ENCODE measurements at regions of chr2 and their contacts with region 1.

Region 1: GRCh38 chr2:74482801-74483674 is at the starts of genes CCDC142 and TTC31:
- DNase-seq: peak; percentile 95
- H3K4me3 ChIP-seq: peak within 1 kb of the TSS; percentile 78
- H3K27ac ChIP-seq: peak within 1 kb of the TSS; percentile 80
- H3K4me1 ChIP-seq: peaks cover 18% of the 10 kb centered on the region
- CTCF ChIP-seq: peak; percentile 95
- total RNA-seq, gene CCDC142: 52.3 and 53.0 TPM in 2 replicates
- total RNA-seq, gene TTC31: 34.6 and 49.5 TPM in 2 replicates

Region 2: DNA sequence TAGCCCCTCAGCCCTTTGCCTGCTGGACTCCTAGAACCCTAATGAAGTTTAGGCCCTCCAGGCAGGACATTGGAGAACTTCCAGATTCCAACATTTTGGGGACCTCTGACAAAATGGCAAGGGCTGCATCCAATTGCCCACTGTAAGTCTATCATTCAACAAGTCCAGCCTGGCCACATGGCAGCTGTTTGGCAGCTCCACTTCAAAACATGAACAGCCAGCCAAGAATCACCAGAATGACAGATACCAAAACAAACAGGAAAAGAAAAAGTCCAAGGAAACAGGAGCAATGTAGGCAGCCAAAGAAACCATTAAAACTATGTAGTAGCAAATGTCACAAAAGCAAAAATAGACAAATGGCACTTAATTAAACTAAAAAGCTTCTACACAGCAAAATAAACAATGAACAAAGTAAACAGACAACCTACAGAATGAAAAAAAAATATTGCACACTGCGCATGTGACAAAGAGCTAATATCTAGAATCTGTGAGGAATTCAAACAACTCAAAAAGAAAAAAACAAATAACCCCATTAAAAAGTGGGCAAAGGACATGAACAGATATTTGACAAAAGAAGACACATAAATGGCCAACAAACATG is 165.2 kb before region 1 on chr2:
- CTCF ChIA-PET with region 1: no interaction called
- POLR2A ChIA-PET with region 1: no interaction called
- intact Hi-C with region 1: no loop called
- DNase-seq: no peak
- H3K4me3 ChIP-seq: no peak overlapping the region
- H3K27ac ChIP-seq: no peak overlapping the region
- H3K4me1 ChIP-seq: no peaks in the 10 kb centered on the region
- CTCF ChIP-seq: no peak

Region 3: GRCh38 chr2:74472086-74472944 is 10.7 kb before region 1 on chr2 and contains the start of gene MRPL53:
- CTCF ChIA-PET with region 1: no interaction called
- POLR2A ChIA-PET with region 1: interaction called, 25 read pairs
- intact Hi-C with region 1: no loop called
- DNase-seq: peak; percentile 97
- H3K4me3 ChIP-seq: peak within 1 kb of the TSS; percentile 85
- H3K27ac ChIP-seq: peak within 1 kb of the TSS; percentile 81
- H3K4me1 ChIP-seq: peaks cover 16% of the 10 kb centered on the region
- CTCF ChIP-seq: 0 out of 2 replicates have a peak, but pooled peaks have one; percentile 20
- total RNA-seq, gene MRPL53: 46.1 and 85.7 TPM in 2 replicates

Region 4: DNA sequence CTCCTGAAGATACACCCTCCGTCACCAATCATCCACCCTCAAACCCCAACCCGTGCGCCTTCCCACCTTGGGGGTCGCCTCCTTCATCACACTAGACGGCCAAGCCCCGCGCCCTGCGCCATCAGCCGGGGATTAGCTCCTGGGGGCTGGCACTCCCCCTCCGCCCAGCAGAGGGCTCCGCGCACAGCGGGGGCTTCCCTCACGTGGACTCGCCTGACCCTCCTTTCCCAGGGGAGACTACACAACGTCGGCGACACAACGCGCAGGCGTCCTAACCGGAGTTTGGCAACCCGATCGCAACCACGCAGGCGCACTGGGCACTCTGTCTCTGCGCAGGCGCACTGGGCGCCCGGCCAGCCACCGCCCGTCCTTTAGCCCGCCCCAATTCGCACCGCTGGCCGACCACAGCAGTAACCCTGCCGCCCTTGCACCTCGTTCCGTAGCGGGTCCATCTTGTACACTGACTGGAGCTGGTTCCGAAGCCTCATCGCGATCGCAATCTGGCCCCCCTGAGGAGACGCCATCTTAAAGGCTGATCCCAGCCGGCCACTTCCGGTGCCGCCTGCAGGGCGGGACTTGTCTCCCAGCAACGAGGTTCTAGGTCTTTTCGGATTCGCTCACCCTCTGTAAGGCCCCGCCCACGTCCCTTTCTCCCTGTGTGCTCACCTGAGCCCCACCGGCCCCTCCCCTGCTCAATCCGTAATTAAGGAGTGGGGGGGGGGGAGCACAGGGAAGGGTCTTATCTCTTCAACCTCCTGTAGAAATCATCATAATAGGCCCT is 24.3 kb after region 1 on chr2 and contains the start of gene PCGF1:
- CTCF ChIA-PET with region 1: no interaction called
- POLR2A ChIA-PET with region 1: no interaction called
- intact Hi-C with region 1: loop called (anchors 1 kb)
- DNase-seq: peak; percentile 99
- H3K4me3 ChIP-seq: peak within 1 kb of the TSS; percentile 77
- H3K27ac ChIP-seq: peak within 1 kb of the TSS; percentile 81
- H3K4me1 ChIP-seq: peaks cover 25% of the 10 kb centered on the region
- CTCF ChIP-seq: peak; percentile 76
- total RNA-seq, gene PCGF1: 9.9 and 16.7 TPM in 2 replicates

Region 5: DNA sequence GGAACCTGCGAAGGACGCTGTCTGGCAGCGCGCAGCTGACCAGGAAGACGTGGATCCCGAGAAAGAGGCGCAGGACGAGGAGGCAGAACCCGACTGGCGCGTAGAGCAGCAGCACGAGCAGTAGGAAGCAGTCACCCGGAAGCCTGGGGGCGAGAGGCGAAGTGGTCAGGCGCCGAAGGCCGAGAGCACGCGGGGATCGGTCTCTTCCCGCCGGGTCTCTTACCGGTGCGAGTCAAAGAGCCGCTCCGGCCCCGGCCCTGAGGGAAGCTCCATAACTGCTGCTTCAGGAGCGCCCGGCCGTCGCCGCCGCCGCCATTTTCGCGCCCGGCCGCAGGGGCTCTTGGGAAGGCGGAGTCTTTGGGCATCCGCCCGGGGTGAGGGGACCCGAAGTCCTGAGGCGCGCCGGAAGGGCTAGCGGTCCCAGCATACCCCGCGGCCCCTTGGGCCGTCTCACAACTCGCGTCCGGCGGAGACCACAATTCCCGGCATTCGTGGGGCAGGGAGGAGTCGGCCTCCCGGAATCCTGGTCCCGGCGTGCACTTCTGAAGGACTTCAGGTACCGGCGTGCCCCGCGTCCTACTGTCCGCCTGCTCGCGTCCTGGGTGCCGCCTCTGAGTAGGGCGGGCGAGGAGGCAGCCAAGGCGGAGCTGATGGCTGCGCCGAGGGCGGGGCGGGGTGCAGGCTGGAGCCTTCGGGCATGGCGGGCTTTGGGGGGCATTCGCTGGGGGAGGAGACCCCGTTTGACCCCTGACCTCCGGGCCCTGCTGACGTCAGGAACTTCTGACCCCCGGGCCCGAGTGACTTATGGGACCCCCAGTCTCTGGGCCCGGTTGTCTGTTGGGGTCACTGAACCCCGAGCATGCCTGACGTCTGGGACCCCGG is 46.6 kb after region 1 on chr2 and contains the starts of genes AUP1 and HTRA2:
- CTCF ChIA-PET with region 1: interaction called, 18 read pairs
- POLR2A ChIA-PET with region 1: interaction called, 6 read pairs
- intact Hi-C with region 1: loop called (anchors 1 kb)
- DNase-seq: peak; percentile 99
- H3K4me3 ChIP-seq: peak within 1 kb of the TSS; percentile 98
- H3K27ac ChIP-seq: peak within 1 kb of the TSS; percentile 67
- H3K4me1 ChIP-seq: peaks cover 33% of the 10 kb centered on the region
- CTCF ChIP-seq: no peak
- total RNA-seq, gene AUP1: 163 and 188 TPM in 2 replicates
- total RNA-seq, gene HTRA2: 54.8 and 60.4 TPM in 2 replicates

Measured in OCI-LY7 (cell line).